ENCODE measurements at regions of chr4 and their contacts with region 1.

Region 1: DNA sequence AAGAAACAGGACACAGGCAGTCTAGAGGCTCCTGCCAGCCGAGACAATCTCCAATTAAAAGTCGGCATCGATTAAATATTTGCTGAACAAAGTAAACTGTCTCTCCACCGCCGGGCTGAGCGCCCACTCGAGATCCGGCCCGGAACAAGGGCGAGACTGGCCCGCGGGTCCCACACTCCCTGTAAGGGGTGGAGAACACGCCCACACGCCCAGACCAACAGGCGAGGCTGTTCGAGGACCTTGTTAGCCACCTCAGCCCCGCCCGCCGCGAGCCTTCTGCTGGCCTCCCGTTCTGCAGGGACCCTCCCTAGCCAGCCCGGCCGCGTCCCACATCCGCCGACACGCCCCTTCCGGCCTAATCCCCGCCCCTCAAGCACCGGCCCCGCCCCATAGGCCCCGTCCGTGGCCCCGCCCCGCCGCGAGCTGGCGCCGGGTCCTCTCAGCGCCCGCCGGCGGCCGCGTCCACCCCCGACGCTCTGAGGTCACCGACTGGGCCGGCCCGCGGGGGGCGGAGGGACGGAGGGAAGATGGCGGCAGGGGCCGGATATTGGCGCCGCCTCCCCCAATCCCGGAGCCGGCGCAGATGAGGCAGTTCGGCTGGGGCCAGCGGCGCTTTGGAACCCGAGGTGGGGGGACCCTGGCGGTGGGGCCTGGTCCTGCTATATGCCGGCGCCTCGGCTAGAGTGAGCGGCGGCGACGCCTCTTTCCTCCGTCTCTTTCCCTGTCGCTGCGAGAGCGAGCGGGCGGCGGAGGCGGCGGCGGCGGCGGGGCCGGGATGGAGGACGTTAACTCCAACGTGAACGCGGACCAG is at the start of gene SLAIN2:
- DNase-seq: peak; percentile 98
- H3K4me3 ChIP-seq: peak within 1 kb of the TSS; percentile 75 to 95 (median 92)
- H3K27ac ChIP-seq: peak within 1 kb of the TSS; percentile 98
- H3K4me1 ChIP-seq: peaks cover 25% of the 10 kb centered on the region
- H3K27me3 ChIP-seq: no peaks in the 10 kb centered on the region
- CTCF ChIP-seq: peak; percentile 36 to 57
- POLR2A ChIP-seq: peak; percentile 94
- total RNA-seq, gene SLAIN2: 40.6 and 49.5 TPM in 2 replicates

Region 2: DNA sequence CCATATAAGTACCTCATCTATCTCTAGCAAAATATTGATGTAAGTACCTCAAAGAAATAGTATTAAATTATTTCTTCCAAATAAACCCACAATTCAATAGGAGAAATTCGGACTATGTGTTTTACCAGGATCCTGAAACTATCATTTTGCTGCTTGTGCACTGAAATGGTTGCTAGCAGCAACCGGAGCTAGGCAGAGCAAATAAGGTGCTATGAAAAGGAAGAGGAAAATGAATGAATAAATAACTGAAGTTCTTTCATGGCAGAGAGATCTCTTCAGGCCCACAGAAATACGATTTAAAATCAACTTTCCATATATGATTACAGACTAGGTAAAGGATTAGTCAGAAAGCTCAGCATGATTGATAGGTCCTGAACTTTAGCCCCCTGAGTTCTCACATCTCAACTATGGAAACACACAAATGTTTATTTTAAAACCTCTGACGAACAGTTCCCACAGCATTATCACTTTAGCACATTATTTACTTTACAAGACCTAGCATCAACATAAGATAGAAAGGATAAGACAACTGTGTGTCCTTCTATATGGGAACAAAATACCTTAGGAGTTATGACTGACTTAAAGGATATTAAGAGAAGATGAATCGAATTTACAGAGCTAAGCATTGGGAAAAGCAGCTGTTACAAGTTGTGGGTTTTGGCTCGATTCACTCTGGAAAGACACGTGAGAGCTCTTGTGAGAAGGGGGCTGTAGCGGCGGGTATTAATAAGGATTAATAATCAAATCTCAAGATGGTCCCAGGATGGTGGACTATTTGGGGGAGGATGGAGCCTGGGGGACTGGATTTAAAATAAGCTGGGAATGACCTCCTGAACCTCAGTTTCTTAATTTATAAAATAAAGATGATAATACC is 607.6 kb before region 1 on chr4:
- CTCF ChIA-PET with region 1: no interaction called
- POLR2A ChIA-PET with region 1: no interaction called
- dilution Hi-C with region 1: no loop called
- intact Hi-C with region 1: no loop called
- DNase-seq: no peak
- H3K4me3 ChIP-seq: no peak overlapping the region
- H3K27ac ChIP-seq: no peak overlapping the region
- H3K4me1 ChIP-seq: no peaks in the 10 kb centered on the region
- H3K27me3 ChIP-seq: peaks cover 2 to 5% of the 10 kb centered on the region in 2 experiments
- CTCF ChIP-seq: no peak
- POLR2A ChIP-seq: no peak

Region 3: DNA sequence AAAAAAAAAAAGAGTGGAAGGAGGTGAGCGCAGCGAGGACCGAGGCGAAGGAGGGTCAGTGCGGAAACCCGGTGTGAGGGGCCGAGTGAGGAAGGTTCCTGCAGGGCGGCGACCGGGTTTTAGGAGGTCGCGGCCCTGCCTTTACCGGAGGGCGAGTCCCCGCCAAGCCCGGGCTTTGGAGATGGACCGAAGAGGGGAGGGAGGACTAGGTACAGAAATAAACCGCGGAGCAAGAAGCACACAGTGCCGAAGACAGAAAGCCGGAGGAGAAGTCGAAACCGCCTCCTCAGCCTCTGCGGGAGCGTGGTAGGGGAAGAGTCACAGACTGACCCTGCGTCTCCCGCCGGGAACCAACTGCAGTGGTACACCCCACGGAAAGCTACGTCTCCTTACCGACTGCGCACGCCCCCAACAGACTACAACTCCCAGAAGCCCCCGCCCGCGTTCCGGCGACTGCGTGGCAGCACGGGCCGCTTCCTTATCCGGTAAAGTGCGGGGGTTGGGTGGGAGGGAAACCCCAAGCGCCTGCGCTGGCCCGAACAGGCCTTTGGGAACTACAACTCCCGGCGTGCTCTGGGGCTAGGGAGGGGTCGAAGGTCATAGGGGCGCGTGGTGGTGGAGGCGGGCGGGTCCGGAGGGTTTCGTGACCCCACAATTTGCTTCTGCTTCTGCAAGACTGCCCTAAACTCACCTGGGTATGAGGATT is 426.8 kb before region 1 on chr4 and contains the start of gene NFXL1:
- CTCF ChIA-PET with region 1: no interaction called
- POLR2A ChIA-PET with region 1: no interaction called
- dilution Hi-C with region 1: no loop called
- intact Hi-C with region 1: loop called (anchors 10 kb)
- DNase-seq: peak; percentile 97
- H3K4me3 ChIP-seq: peak within 1 kb of the TSS; percentile 73 to 93 (median 83)
- H3K27ac ChIP-seq: peak within 1 kb of the TSS; percentile 54
- H3K4me1 ChIP-seq: peaks cover 17% of the 10 kb centered on the region
- H3K27me3 ChIP-seq: no peaks in the 10 kb centered on the region
- CTCF ChIP-seq: no peak
- POLR2A ChIP-seq: peak; percentile 93
- total RNA-seq, gene NFXL1: 11.8 and 14.6 TPM in 2 replicates

Region 4: DNA sequence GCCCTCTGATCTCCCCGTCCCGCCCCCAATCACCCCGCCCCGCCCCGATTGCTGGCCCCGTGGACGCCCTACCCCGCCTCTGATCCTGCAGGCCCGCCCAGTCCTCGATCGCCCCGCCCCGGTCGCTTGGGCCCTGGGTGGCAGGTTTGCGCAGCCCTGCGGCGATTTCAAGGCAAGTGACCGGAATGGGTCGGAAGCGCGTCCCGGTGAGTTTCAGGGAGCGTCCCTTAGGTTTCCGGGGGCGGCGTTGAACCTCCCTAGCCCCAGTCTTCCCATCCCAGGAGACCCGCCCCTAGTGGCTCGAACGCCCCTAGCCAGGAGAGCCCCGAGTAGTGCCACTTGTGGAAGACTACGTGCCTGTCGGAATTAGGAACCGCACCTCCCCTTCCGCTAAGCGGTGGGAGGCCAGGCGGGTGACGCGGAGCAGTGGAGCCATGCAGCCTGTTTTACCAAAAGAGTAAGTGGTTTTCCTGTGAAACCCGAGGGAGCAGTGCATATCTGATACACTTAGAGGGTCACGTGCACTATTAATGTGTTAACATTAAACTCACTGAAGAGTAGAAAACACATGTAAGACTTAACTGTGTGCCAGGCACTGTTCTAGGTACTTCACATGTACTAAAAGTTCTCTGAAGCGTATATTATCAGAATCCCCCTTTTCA is 71.2 kb before region 1 on chr4:
- CTCF ChIA-PET with region 1: no interaction called
- POLR2A ChIA-PET with region 1: no interaction called
- dilution Hi-C with region 1: no loop called
- intact Hi-C with region 1: loop called (anchors 2 kb)
- DNase-seq: peak; percentile 54
- H3K4me3 ChIP-seq: peak overlapping the region; percentile 34 to 81 (median 48)
- H3K27ac ChIP-seq: no peak overlapping the region
- H3K4me1 ChIP-seq: peaks cover 2% of the 10 kb centered on the region
- H3K27me3 ChIP-seq: peaks cover 0 to 2% of the 10 kb centered on the region in 2 experiments
- CTCF ChIP-seq: peak; percentile 14 to 37
- POLR2A ChIP-seq: no peak

Region 5: GRCh38 chr4:48329976-48330375 is 11.2 kb before region 1 on chr4:
- CTCF ChIA-PET with region 1: interaction called, 5 read pairs
- POLR2A ChIA-PET with region 1: interaction called, 3 read pairs
- dilution Hi-C with region 1: no loop called
- intact Hi-C with region 1: loop called (anchors 1 kb)
- DNase-seq: peak; percentile 62
- H3K4me3 ChIP-seq: no peak overlapping the region
- H3K27ac ChIP-seq: peak overlapping the region; percentile 23
- H3K4me1 ChIP-seq: peaks cover 11% of the 10 kb centered on the region
- H3K27me3 ChIP-seq: no peaks in the 10 kb centered on the region
- CTCF ChIP-seq: no peak
- POLR2A ChIP-seq: no peak

Region 6: GRCh38 chr4:48490012-48490679 is 149.0 kb after region 1 on chr4 and contains the start of gene ZAR1:
- CTCF ChIA-PET with region 1: no interaction called
- POLR2A ChIA-PET with region 1: no interaction called
- dilution Hi-C with region 1: no loop called
- intact Hi-C with region 1: no loop called
- DNase-seq: no peak
- H3K4me3 ChIP-seq: no peak within 1 kb of the TSS
- H3K27ac ChIP-seq: no peak within 1 kb of the TSS
- H3K4me1 ChIP-seq: peaks cover 4% of the 10 kb centered on the region
- H3K27me3 ChIP-seq: peaks cover 35 to 75% of the 10 kb centered on the region in 2 experiments
- CTCF ChIP-seq: no peak
- POLR2A ChIP-seq: no peak
- total RNA-seq, gene ZAR1: not detected in 2 replicates

Region 7: GRCh38 chr4:48539597-48539996 is 198.4 kb after region 1 on chr4:
- CTCF ChIA-PET with region 1: no interaction called
- POLR2A ChIA-PET with region 1: no interaction called
- dilution Hi-C with region 1: no loop called
- intact Hi-C with region 1: no loop called
- DNase-seq: no peak
- H3K4me3 ChIP-seq: no peak overlapping the region
- H3K27ac ChIP-seq: no peak overlapping the region
- H3K4me1 ChIP-seq: peaks cover 5% of the 10 kb centered on the region
- H3K27me3 ChIP-seq: no peaks in the 10 kb centered on the region
- CTCF ChIP-seq: no peak
- POLR2A ChIP-seq: no peak

Measured in endothelial cell of umbilical vein (primary cell).